ENCODE measurements at regions of chr22 and their contacts with region 1.

Region 1: DNA sequence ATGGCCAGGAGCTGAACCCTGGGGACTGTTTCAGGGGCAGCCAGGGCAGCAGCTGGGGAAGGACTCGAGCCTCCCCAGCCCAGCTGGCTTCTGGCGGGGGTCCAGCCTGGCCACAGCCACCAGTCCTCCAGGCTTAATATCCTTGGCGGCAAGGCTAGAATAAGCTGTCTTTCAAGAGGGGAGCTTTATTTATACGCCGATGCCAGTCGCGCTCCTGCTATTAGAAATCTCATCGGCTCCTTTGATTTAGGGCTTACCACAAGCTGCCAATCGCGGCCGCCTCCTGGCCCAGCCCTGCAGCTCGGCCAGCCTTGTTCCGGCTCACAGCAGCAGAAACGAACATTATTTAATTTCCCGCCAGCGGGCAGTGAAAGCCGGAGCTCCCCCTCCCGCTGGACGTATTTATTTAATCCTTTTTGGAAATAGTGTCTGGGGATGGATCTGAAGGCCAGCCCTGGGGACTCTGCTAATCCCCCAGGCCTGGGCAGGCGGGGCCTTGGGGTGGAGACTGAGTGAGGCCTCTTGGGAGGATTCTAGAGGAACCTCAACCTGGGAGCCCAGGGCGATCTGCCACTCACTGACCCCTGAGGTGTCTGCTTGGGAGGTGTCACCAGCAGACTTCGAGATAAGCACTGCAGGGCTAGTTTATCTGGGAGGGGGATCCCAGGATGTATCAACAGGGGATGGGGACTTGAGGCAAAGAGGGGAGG is 363.1 kb downstream of the MN1 start:
- DNase-seq: no peak

Region 2: DNA sequence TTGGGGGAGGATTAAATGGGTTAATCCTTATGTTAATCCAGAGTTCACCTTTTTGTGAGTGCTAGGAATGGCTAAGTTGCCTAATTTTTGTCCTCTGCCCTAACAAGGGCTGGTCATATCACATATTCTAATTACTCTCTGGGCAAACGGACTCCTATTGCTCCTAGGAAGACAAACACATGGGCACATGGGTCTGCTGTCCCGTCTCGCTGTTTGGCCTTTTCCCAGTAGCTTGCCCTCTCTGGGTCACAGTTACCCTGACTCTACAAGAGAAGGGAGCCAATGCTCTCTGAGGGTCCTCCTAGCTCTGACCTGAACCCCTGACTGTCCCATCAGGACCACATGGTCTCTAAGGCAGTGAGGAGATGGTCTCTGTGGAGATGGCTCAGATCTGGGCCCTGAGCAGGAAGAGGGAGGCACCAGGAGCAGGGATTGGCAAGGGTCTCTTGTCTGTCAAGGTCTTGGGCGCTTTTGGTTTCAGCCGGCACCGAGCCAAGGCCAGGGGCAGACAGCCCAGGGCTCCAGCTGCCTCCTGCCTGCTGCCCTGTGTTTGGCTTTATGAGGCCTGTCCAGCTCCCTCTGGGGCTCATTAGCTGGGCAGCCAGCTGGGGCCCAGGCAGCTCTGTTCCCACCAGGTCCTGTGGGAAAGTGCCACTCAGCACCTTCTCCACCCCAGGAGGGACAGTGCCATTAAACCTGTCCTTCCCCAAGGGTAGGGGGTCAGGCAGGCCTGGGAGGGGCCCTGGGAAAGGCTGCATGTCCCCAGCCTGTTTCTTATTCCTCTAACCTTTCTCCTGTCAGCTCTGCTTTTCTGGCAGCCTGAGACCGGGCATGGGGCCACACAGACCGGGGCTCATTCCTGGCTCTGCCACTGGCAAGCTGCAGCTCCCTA is 196.8 kb before region 1 on chr22:
- intact Hi-C with region 1: loop called (anchors 10 kb)
- DNase-seq: no peak

Region 3: DNA sequence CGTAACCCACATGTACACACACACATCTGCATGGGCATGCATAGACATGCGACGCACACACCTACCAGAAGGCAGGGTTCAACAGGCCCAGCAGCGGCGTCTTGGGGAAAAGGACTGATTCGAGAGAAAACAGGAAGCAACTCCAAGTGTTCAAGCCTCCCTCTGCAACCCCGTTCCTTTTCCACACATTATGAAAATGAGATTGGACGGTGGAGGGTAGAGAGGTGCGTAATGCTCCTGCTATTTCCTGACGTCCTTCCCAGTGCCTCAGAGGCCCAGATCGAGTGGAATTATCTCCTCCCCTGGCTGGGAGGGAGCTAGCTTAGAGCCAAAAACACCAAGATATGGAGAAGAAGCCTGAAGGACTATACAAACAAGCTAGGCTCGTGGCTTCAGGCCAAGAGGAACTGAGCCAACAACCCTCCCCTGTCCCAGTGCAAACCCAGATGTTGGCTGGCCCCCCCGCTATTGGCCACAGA is 73.9 kb after region 1 on chr22:
- intact Hi-C with region 1: loop called (anchors 5 kb)
- DNase-seq: peak; percentile 76

Region 4: DNA sequence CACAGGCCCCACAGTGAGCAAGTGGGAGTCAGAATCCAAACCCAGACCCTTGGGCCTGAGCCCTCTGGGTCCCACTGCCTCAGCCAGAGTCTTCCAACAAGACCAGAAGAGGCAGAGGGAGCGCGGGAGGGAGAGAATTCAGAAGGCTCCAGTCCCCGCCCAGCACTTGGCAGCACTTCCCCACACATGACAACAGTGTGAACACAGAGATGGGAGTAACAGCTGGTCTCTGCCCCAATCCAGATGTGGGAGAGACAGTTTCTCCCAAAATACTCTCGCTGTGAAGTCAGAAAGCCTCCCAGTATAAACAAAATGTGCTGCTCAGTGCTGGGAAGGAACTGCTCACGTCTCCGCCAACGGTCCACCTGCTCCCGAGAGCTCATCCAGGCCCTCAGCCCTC is 143.3 kb after region 1 on chr22:
- intact Hi-C with region 1: loop called (anchors 10 kb)
- DNase-seq: peak; percentile 81

Measured in cardiac septum (tissue), 1 donor.